MCF 10A (cell line): ENCODE measurements at regions of chr12 and their contacts with region 1.

Region 1: DNA sequence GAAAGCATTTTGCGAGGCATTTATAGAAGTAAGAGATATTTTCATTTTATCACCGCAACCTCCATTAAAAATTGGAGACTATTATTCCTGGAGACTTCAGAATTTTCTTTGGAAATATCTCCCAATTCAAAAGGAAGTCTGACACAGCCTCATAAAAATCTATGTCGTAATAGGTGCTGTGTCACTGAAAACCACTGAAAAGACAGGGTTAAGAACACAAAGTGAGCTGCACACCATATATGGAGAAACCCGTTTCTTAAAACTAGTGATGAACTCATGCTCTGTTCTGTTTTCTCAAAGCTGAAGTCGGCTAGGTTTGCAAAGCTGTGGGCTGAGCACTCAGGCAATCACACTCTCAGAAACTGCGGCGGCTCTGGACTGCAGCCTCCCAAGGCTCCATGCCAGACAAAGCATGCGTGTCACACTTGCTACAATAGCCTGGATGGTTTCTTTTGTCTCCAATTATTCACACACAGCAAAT is at the start of gene GLIPR1:
- DNase-seq: peak; percentile 95
- H3K4me3 Mint-ChIP-seq: peak within 1 kb of the TSS; percentile 66
- H3K27ac Mint-ChIP-seq: peak within 1 kb of the TSS; percentile 94
- H3K4me1 Mint-ChIP-seq: peaks cover 41% of the 10 kb centered on the region
- H3K27me3 Mint-ChIP-seq: no peaks in the 10 kb centered on the region
- CTCF ChIP-seq: no peak
- total RNA-seq, gene GLIPR1: 29.6 and 36.4 TPM in 2 replicates

Region 2: GRCh38 chr12:75334384-75335030 is 146.0 kb before region 1 on chr12 and contains the start of gene GLIPR1L1:
- CTCF ChIA-PET with region 1: interaction called, 21 read pairs
- POLR2A ChIA-PET with region 1: interaction called, 3 read pairs
- intact Hi-C with region 1: loop called (anchors 1 kb)
- DNase-seq: peak; percentile 88
- H3K4me3 Mint-ChIP-seq: peak within 1 kb of the TSS; percentile 77
- H3K27ac Mint-ChIP-seq: peak within 1 kb of the TSS; percentile 33
- H3K4me1 Mint-ChIP-seq: peaks cover 8% of the 10 kb centered on the region
- H3K27me3 Mint-ChIP-seq: no peaks in the 10 kb centered on the region
- CTCF ChIP-seq: peak; percentile 91
- total RNA-seq, gene GLIPR1L1: not detected in 2 replicates

Region 3: DNA sequence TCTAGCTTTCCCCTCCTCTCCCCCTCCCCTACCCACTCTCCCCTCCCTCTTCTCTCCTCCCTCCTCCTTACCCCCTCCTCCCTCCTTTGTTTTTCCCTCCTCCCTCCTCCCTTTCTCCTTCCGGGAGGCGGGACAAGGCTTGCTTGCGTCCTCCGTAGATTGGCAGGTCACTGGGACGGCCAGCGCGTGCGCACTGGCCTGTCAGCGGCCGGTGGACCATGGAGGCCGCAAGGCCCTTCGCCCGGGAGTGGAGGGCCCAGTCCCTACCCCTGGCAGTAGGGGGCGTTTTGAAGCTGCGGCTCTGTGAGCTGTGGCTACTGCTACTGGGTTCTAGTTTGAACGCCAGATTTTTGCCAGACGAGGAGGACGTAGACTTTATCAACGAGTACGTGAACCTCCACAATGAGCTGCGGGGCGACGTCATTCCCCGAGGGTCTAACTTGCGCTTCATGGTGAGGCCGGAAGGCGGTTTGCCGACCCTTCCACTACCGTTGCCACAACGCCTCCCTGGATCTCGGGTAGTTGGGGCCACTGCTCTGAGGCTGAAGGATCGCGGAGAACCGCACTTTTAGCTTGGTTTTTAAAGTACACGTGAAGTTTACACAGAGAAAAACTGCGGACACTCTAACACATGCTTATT is 89.5 kb before region 1 on chr12 and contains the start of gene GLIPR1L2:
- CTCF ChIA-PET with region 1: interaction called, 17 read pairs
- POLR2A ChIA-PET with region 1: interaction called, 69 read pairs
- intact Hi-C with region 1: loop called (anchors 1 kb)
- DNase-seq: peak; percentile 98
- H3K4me3 Mint-ChIP-seq: peak within 1 kb of the TSS; percentile 91
- H3K27ac Mint-ChIP-seq: peak within 1 kb of the TSS; percentile 99
- H3K4me1 Mint-ChIP-seq: peaks cover 28% of the 10 kb centered on the region
- H3K27me3 Mint-ChIP-seq: no peaks in the 10 kb centered on the region
- CTCF ChIP-seq: peak; percentile 85
- total RNA-seq, gene GLIPR1L2: 0.23 TPM in 1 of 2 replicates, not detected in the other

Region 4: GRCh38 chr12:75491169-75491568 is 10.7 kb after region 1 on chr12:
- CTCF ChIA-PET with region 1: interaction called, 17 read pairs
- POLR2A ChIA-PET with region 1: interaction called, 8 read pairs
- intact Hi-C with region 1: no loop called
- DNase-seq: no peak
- H3K4me3 Mint-ChIP-seq: no peak overlapping the region
- H3K27ac Mint-ChIP-seq: no peak overlapping the region
- H3K4me1 Mint-ChIP-seq: peaks cover 13% of the 10 kb centered on the region
- H3K27me3 Mint-ChIP-seq: no peaks in the 10 kb centered on the region
- CTCF ChIP-seq: no peak

Region 5: GRCh38 chr12:75505706-75506312 is 25.3 kb after region 1 on chr12:
- CTCF ChIA-PET with region 1: interaction called, 16 read pairs
- POLR2A ChIA-PET with region 1: interaction called, 29 read pairs
- intact Hi-C with region 1: no loop called
- DNase-seq: peak; percentile 40
- H3K4me3 Mint-ChIP-seq: no peak overlapping the region
- H3K27ac Mint-ChIP-seq: no peak overlapping the region
- H3K4me1 Mint-ChIP-seq: peaks cover 23% of the 10 kb centered on the region
- H3K27me3 Mint-ChIP-seq: no peaks in the 10 kb centered on the region
- CTCF ChIP-seq: peak; percentile 56

Region 6: DNA sequence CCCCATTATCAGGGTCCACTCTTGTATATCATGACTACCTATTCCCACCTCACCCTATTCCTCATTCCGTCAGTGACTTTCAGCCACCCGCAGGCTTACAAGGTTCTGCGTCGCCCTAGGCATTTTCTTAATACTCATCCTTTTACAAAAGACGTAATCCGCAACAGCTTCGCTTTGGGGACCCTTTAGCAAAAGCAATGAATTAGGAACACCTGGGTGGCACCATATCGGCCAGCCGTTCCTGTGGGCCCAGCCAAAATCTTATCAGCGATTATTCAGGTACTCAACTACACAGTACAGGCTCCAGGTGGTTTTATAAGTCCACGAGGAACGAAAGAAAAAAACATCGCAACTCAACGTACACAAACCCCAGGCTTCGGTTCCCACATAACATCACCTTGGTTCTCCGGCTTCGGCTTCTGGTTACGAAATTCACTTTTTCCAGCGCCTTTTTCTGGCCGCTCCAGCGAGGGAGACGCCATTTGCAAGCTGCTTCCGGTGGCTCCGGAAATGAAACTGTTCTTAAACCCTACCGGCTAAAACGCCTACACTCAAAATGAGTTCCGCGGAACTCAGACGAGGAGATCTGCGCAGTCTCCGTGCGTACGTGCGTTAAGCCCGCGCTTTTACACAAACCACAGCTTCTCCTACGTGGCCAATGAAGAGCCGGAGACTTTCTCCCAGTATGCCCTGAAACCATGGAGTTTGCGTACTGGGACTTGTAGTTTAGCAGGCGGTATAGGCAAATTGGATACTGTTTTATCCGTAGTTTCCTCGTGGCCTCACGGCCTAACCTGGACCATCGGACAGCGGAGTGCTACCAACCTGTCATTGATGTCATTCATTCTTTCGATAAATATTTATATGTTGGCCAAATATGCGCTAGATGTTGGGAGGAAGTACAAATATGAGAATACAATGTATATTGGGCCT is 30.9 kb after region 1 on chr12 and contains the start of gene KRR1:
- CTCF ChIA-PET with region 1: interaction called, 12 read pairs
- POLR2A ChIA-PET with region 1: interaction called, 29 read pairs
- intact Hi-C with region 1: no loop called
- DNase-seq: peak; percentile 95
- H3K4me3 Mint-ChIP-seq: peak within 1 kb of the TSS; percentile 100
- H3K27ac Mint-ChIP-seq: peak within 1 kb of the TSS; percentile 99
- H3K4me1 Mint-ChIP-seq: peaks cover 19% of the 10 kb centered on the region
- H3K27me3 Mint-ChIP-seq: no peaks in the 10 kb centered on the region
- CTCF ChIP-seq: no peak
- total RNA-seq, gene KRR1: 68.0 and 76.8 TPM in 2 replicates

Region 7: GRCh38 chr12:75571204-75571603 is 90.7 kb after region 1 on chr12:
- CTCF ChIA-PET with region 1: no interaction called
- POLR2A ChIA-PET with region 1: no interaction called
- intact Hi-C with region 1: no loop called
- DNase-seq: no peak
- H3K4me3 Mint-ChIP-seq: no peak overlapping the region
- H3K27ac Mint-ChIP-seq: no peak overlapping the region
- H3K4me1 Mint-ChIP-seq: no peaks in the 10 kb centered on the region
- H3K27me3 Mint-ChIP-seq: no peaks in the 10 kb centered on the region
- CTCF ChIP-seq: no peak